Left cardiac atrium (tissue), 4 donors: ENCODE measurements at regions of chr6 and their contacts with region 1.

Region 1: DNA sequence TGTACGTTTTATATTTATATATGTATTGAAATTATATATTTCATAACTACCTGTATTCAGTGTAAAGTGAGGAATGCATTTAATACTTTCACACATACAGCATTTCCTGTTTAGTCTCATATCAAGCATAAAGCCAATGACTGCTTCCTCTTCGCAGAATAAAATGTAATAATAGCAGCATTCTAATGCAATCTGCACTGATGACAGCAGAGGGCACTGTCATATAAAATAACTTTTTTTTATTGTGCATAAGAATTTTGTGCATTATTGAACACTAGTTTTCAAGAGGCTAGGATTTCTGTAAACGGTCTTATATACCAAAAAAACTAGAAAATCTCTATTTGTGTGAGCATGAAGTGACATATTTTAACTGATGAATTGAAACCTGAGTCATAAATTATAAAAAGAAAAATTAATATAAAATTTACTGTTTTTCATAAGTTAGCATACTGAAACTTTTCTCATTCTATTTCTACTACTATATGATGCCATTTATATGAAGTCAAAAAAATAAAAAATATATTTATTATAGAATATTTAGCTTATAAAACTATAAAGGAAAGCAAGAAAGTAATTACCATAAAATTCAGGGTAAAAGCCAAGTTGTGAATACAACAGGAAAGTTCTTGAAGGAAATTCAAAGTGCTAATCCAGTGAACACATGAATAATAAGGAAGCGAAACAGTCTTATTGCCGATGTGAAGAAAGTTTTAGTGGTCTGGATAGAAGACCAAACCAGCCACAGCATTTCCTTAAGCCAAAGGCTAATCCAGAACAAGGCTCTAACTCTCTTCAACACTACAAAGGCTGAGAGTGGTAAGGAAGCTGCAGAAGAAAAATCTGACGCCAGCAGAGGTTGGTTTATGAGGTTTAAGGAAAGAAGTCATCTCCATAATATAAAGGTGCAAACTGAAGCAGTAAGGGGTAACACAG is 36.3 kb downstream of the RNF146 start:
- DNase-seq: no peak
- ATAC-seq: peak; percentile 30 to 39

Region 2: DNA sequence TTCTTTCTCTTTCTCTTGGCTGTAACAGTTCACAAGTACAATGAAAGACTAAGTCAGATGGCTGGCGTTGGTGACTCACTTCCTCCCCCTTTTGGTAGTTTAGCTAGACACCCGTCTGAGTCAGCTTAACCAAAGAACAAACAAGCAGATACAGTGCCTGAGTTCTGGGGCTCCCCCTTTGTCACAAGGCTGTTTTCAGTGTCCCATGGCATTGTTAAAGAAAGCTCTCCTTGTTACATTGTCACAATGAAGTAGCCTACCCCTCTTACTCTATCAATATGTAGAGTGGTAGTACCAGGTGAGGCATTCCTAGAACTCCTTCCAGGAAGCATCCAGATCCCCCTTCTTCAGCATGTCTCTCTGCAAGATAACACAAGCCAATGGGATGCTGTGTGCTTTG is 117.6 kb after region 1 on chr6:
- intact Hi-C with region 1: loop called in 1 of 2 experiments (anchors 5 kb)
- DNase-seq: peak; percentile 63
- ATAC-seq: peak; percentile 77 to 98

Region 3: GRCh38 chr6:127484212-127484858 is 181.3 kb after region 1 on chr6:
- intact Hi-C with region 1: no loop called
- DNase-seq: no peak
- ATAC-seq: no peak

Region 4: DNA sequence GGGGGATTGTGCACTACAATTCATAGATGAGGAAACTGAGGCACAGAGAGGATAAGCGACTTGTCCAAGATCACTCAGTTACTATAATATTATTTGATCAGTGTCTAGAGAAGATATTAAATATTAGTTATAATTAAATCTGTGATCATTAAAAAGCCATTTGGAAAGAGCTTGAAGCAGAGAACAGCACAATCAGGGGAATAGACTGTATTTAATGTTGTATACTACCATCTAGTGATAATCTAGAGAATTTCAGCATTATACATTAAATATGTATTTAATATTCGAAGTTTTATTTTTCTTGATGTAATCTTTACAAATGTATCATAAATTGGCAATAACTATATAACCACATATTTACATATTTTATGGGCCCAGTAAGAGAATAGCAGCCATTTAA is 236.3 kb after region 1 on chr6:
- intact Hi-C with region 1: loop called in 1 of 2 experiments (anchors 5 kb)
- DNase-seq: no peak
- ATAC-seq: no peak